A549 (cell line): ENCODE measurements at regions of chr14 and their contacts with region 1.

Region 1: GRCh38 chr14:34496679-34497513 is 34.9 kb upstream of the SPTSSA start:
- DNase-seq: peak; percentile 98 to 99
- ATAC-seq: peak; percentile 93 to 98
- H3K4me3 ChIP-seq: no peak overlapping the region; the same call in 2 of the 3 replicates
- H3K27ac ChIP-seq: peak overlapping the region; percentile 89 to 95
- H3K4me1 ChIP-seq: peaks cover 45% of the 10 kb centered on the region
- CTCF ChIP-seq: peak; percentile 42
- EP300 ChIP-seq: peak; percentile 64 to 89; a peak in 3 of 5 replicates
- POLR2A ChIP-seq: peak; percentile 42
- RAD21 ChIP-seq: peak; percentile 44 to 57; a peak in 4 of 5 replicates

Region 2: DNA sequence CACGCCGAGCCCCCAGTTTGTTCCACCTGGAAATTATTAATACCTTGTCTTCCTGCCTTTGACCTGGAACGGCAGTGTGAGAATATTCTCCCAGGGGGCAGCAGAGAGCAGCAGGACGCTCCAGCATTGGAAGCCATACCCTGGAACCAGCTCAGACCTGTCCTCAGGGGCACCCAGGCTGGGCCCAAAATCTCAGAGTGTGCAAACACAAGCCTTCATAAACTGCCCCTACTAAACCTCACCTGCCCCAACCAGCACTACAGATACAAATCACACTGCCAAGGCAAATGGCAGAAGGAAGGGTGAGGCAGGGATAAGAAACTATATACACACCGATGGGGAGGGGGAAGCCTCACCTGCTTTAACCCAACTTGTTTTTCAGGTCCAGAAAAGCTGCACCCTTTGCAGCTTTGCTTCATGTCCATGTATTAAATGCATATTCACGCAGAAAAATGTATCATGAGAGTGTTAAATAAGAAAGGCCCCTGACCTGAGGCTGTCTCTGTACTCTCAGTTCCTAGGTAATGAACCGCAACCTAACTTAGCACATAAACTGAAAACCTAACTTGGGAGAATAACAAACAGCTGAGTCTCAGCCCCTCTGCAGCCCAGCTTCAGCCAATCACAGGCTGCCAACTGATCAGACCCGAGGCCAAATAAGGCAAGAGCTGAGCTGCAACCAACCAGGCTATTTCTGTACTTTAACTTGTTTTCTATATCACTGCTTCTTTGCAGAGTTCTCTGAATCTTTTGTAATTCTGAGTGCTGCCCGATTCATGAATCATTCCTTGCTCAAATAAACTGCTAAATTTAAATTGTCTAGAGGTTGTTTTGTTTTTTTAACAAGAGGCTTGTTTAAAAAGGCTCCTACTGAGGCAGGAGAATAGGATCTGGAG is 164.9 kb before region 1 on chr14:
- CTCF ChIA-PET with region 1: interaction called, 104 read pairs
- POLR2A ChIA-PET with region 1: interaction called, 7 read pairs
- DNase-seq: peak; percentile 36 to 82
- ATAC-seq: peak; percentile 92 to 96
- H3K4me3 ChIP-seq: no peak overlapping the region
- H3K27ac ChIP-seq: peak overlapping the region; percentile 66 to 83
- H3K4me1 ChIP-seq: peaks cover 22% of the 10 kb centered on the region
- CTCF ChIP-seq: peak; percentile 81
- EP300 ChIP-seq: no peak
- POLR2A ChIP-seq: no peak
- RAD21 ChIP-seq: peak; percentile 85 to 87

Region 3: DNA sequence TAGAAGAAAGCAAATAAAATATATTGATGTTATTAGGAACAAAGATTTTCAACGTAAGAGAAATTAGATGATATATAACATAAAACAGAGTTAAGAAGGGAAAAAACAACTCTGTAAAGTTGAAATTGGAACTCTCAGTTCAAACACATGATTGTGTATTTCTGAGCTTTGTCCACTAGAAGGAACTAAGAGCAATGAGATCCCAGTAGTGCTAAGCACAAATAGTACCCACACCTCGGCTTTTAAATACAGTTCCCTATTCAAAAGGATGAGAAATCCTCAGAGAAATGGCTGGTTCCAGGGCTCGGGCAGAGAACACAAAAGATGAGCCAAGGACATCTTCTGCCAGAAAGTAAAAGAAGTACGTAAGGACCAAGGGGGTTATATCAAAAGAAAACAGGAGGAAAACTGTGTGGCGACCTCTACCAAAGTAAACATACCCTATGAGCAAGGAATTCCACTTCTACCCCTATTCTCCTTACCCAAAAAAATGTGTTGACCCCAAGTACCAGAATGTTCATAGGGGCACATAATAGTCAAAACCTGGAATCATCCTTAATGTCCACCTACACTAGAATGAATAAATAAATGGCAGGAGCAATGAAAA is 131.5 kb before region 1 on chr14:
- CTCF ChIA-PET with region 1: interaction called, 41 read pairs
- POLR2A ChIA-PET with region 1: interaction called, 7 read pairs
- DNase-seq: peak in 1 of 2 experiments; percentile 51
- ATAC-seq: peak; percentile 37 to 71; a peak in 3 of 6 replicates
- H3K4me3 ChIP-seq: no peak overlapping the region
- H3K27ac ChIP-seq: peak overlapping the region; percentile 67 to 86
- H3K4me1 ChIP-seq: peaks cover 39% of the 10 kb centered on the region
- CTCF ChIP-seq: peak; percentile 46
- EP300 ChIP-seq: no peak
- POLR2A ChIP-seq: no peak
- RAD21 ChIP-seq: peak; percentile 55 to 64

Region 4: GRCh38 chr14:34461334-34462131 is 35.4 kb before region 1 on chr14:
- CTCF ChIA-PET with region 1: interaction called, 6 read pairs
- POLR2A ChIA-PET with region 1: interaction called, 26 read pairs
- DNase-seq: peak; percentile 41 to 73
- ATAC-seq: peak; percentile 63 to 68
- H3K4me3 ChIP-seq: peak overlapping the region; percentile 79
- H3K27ac ChIP-seq: peak overlapping the region; percentile 88 to 92
- H3K4me1 ChIP-seq: peaks cover 36% of the 10 kb centered on the region
- CTCF ChIP-seq: no peak
- EP300 ChIP-seq: no peak
- POLR2A ChIP-seq: no peak
- RAD21 ChIP-seq: no peak; a peak in 1 of 5 replicates